ENCODE measurements at regions of chr15 and their contacts with region 1.

Region 1: GRCh38 chr15:34056936-34057335 is 17.9 kb upstream of the AVEN start:
- DNase-seq: no peak
- H3K4me3 ChIP-seq: no peak overlapping the region
- H3K27ac ChIP-seq: no peak overlapping the region
- H3K4me1 ChIP-seq: no peaks in the 10 kb centered on the region
- H3K27me3 ChIP-seq: no peaks in the 10 kb centered on the region
- CTCF ChIP-seq: no peak

Region 2: DNA sequence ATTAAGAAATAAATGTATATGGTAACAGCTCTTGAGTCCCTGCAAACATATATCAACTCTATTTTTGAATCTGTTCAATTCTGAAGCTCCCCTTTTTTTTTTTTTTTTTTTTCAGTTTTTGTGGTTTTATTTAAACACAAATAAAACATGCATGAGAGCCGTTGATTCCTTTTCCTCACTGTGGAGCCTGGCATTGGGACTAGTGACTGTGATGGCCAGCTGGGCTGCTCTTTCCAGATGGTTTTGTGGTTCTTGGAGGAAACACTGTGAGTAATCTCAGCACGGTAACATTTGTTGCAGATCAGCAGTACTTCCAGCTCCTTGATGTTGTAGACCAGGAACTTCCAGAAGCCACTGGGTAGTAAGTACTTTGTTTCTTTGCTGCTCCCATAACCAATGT is 28.8 kb after region 1 on chr15:
- CTCF ChIA-PET with region 1: interaction called, 3 read pairs
- POLR2A ChIA-PET with region 1: no interaction called
- intact Hi-C with region 1: loop called (anchors 2 kb)
- DNase-seq: no peak
- H3K4me3 ChIP-seq: no peak overlapping the region
- H3K27ac ChIP-seq: no peak overlapping the region
- H3K4me1 ChIP-seq: no peaks in the 10 kb centered on the region
- H3K27me3 ChIP-seq: no peaks in the 10 kb centered on the region
- CTCF ChIP-seq: no peak